ENCODE measurements at regions of chr5 and their contacts with region 1.

Region 1: GRCh38 chr5:151740336-151740942 is 18.0 kb downstream of the ATOX1 start:
- DNase-seq: peak; percentile 79
- H3K4me3 ChIP-seq: no peak overlapping the region
- H3K27ac ChIP-seq: peak overlapping the region; percentile 88
- H3K4me1 ChIP-seq: peaks cover 38% of the 10 kb centered on the region
- H3K27me3 ChIP-seq: no peaks in the 10 kb centered on the region
- CTCF ChIP-seq: peak; percentile 68 to 86
- POLR2A ChIP-seq: no peak

Region 2: GRCh38 chr5:151315998-151316597 is 424.3 kb before region 1 on chr5:
- CTCF ChIA-PET with region 1: interaction called, 4 read pairs
- POLR2A ChIA-PET with region 1: interaction called, 4 read pairs
- dilution Hi-C with region 1: no loop called
- intact Hi-C with region 1: loop called (anchors 5 kb)
- DNase-seq: peak; percentile 73
- H3K4me3 ChIP-seq: no peak overlapping the region
- H3K27ac ChIP-seq: no peak overlapping the region
- H3K4me1 ChIP-seq: no peaks in the 10 kb centered on the region
- H3K27me3 ChIP-seq: no peaks in the 10 kb centered on the region
- CTCF ChIP-seq: peak; percentile 88 to 90
- POLR2A ChIP-seq: no peak

Region 3: GRCh38 chr5:151523335-151523734 is 217.1 kb before region 1 on chr5:
- CTCF ChIA-PET with region 1: interaction called, 13 read pairs
- POLR2A ChIA-PET with region 1: no interaction called
- dilution Hi-C with region 1: no loop called
- intact Hi-C with region 1: loop called (anchors 5 kb)
- DNase-seq: peak; percentile 52
- H3K4me3 ChIP-seq: no peak overlapping the region
- H3K27ac ChIP-seq: no peak overlapping the region
- H3K4me1 ChIP-seq: no peaks in the 10 kb centered on the region
- H3K27me3 ChIP-seq: peaks cover 0 to 2% of the 10 kb centered on the region in 2 experiments
- CTCF ChIP-seq: peak; percentile 53 to 57
- POLR2A ChIP-seq: no peak

Region 4: DNA sequence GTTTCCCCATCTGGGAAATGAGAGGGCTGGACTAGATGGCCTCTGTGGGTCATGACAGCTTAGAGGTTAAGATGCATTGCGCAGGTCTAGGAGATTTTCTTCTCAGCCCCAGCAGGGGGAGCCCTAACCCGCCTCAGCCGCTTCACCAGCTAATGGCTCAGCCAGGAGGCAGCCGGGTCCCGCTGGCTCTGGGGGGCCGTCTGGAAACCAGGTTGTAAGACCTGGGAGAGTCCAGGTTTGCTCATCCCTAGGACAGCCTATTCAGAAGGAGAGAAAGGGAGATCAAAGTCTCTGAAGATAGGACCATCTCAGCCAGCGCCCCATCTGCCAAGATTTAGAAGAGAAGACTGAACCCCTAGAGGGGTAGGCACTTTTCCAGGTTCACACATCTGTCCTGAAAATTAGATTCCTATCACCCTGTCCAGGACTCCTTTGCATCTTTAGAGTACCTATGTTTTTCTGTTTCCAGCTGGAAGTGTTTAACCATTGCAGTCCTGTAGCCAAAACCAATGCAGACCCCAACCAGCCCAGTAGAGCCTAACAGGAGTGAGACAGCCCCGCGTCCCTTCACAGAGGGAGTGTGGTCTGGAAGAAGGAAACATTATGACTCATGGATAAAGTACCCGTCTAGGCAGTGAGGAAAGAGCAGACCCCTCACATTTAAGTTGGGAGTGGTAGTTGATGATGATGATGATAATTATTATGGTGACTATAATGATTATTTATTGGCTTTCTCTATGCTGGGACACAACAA is 81.3 kb before region 1 on chr5:
- CTCF ChIA-PET with region 1: interaction called, 323 read pairs
- POLR2A ChIA-PET with region 1: interaction called, 8 read pairs
- dilution Hi-C with region 1: no loop called
- intact Hi-C with region 1: loop called (anchors 1 kb)
- DNase-seq: peak; percentile 84
- H3K4me3 ChIP-seq: no peak overlapping the region
- H3K27ac ChIP-seq: no peak overlapping the region
- H3K4me1 ChIP-seq: peaks cover 16% of the 10 kb centered on the region
- H3K27me3 ChIP-seq: no peaks in the 10 kb centered on the region
- CTCF ChIP-seq: peak; percentile 85 to 92
- POLR2A ChIP-seq: peak; percentile 49

Region 5: GRCh38 chr5:151699071-151699901 is 41.2 kb before region 1 on chr5:
- CTCF ChIA-PET with region 1: interaction called, 21 read pairs
- POLR2A ChIA-PET with region 1: interaction called, 3 read pairs
- dilution Hi-C with region 1: no loop called
- intact Hi-C with region 1: loop called (anchors 1 kb)
- DNase-seq: peak; percentile 94
- H3K4me3 ChIP-seq: no peak overlapping the region
- H3K27ac ChIP-seq: peak overlapping the region; percentile 93
- H3K4me1 ChIP-seq: peaks cover 12% of the 10 kb centered on the region
- H3K27me3 ChIP-seq: no peaks in the 10 kb centered on the region
- CTCF ChIP-seq: no peak
- POLR2A ChIP-seq: peak; percentile 62

Region 6: GRCh38 chr5:151758430-151759241 is 18.2 kb after region 1 on chr5 and contains the start of gene ATOX1:
- CTCF ChIA-PET with region 1: interaction called, 11 read pairs
- POLR2A ChIA-PET with region 1: interaction called, 5 read pairs
- dilution Hi-C with region 1: no loop called
- intact Hi-C with region 1: loop called (anchors 1 kb)
- DNase-seq: peak; percentile 94
- H3K4me3 ChIP-seq: peak within 1 kb of the TSS; percentile 59 to 86 (median 68)
- H3K27ac ChIP-seq: peak within 1 kb of the TSS; percentile 76
- H3K4me1 ChIP-seq: peaks cover 18% of the 10 kb centered on the region
- H3K27me3 ChIP-seq: no peaks in the 10 kb centered on the region
- CTCF ChIP-seq: peak in 1 of 2 donors; percentile 7
- POLR2A ChIP-seq: peak; percentile 96
- total RNA-seq, gene ATOX1: 113 and 130 TPM in 2 replicates

Region 7: DNA sequence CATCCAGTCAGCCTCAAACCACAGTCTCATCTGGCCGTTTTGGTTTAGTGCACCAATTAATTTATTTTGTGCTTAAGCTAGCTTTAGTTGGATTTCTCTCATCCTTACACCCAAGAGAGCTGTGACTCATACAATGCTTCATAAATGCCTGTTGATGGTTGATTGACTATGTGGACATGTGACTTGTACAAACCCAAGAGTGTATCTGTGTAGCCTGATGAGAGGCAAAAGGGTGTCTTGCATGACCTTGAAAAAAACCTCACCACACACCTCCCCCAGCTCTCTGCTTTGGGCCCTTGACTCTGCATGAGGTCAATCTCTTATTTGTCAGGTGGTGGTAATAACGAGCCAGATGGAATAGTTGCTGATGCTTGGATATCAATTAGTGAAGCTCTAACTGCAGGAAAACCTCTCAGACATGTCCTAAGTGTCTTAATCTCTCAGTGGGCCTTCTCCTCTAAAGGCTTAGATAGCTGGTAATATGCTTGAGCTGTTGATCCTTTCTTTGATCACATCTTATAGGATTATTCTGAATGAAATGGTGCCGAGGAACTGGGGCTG is 194.8 kb after region 1 on chr5:
- CTCF ChIA-PET with region 1: no interaction called
- POLR2A ChIA-PET with region 1: no interaction called
- dilution Hi-C with region 1: no loop called
- intact Hi-C with region 1: no loop called
- DNase-seq: no peak
- H3K4me3 ChIP-seq: no peak overlapping the region
- H3K27ac ChIP-seq: no peak overlapping the region
- H3K4me1 ChIP-seq: no peaks in the 10 kb centered on the region
- H3K27me3 ChIP-seq: no peaks in the 10 kb centered on the region
- CTCF ChIP-seq: no peak
- POLR2A ChIP-seq: no peak

Region 8: GRCh38 chr5:152178350-152178699 is 437.9 kb after region 1 on chr5:
- CTCF ChIA-PET with region 1: no interaction called
- POLR2A ChIA-PET with region 1: no interaction called
- dilution Hi-C with region 1: no loop called
- intact Hi-C with region 1: no loop called
- DNase-seq: no peak
- H3K4me3 ChIP-seq: no peak overlapping the region
- H3K27ac ChIP-seq: no peak overlapping the region
- H3K4me1 ChIP-seq: no peaks in the 10 kb centered on the region
- H3K27me3 ChIP-seq: no peaks in the 10 kb centered on the region
- CTCF ChIP-seq: no peak
- POLR2A ChIP-seq: no peak